GM13976 (cell line): ENCODE measurements at regions of chr2 and their contacts with region 1.

Region 1: DNA sequence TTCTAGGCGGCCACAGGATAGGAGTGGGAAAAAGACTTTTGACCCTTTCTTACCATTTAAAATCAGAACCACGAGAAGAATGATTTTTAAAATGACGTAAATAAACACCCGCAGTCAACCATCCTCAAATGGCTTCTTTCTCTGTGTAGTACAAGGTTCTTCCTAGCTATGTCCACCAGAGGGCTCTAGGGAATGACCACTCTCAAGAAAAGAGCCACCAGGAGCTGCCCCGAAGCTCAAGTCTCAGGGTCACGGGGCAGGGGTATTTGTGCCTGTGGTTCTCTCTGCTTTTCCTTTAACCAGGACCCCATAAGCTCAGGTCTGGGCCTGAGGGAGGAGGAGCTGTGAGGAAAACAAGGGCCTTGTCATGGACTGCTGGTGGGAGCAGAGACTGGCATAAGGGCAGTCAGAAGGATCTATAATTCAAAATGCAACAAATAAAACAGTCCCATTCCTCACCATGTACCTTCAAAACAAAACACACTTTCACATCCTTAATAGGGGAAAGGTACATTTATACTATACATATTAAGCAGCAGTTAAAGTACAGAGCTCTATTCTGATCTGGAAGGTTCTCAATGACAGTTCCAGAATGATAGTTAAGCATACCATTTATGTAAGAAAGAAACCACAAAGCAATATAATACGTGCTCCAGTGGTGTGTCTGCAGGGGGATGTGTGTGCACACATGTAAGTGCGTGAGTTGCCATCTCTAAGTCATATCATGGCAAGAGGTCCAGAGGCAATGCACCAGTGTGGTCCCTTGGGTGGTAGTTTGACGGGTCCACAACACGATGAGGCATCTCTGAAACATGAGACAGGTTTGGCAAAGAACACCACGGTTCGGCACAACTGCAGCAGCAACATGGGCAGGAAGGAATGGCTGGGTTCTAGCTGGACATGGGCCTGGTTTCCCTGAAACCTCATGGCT is 18.6 kb downstream of the LYPD1 start:
- DNase-seq: no peak
- CTCF ChIP-seq: peak; percentile 26

Region 2: GRCh38 chr2:133171393-133172004 is 520.1 kb after region 1 on chr2:
- in situ Hi-C with region 1: loop called (anchors 25 kb)
- DNase-seq: peak; percentile 31
- CTCF ChIP-seq: peak; percentile 51